ENCODE measurements at regions of chr7 and their contacts with region 1.

Region 1: GRCh38 chr7:27210441-27211083 is 10.7 kb upstream of the HOXA13 start:
- DNase-seq: no peak
- ATAC-seq: peak; percentile 87
- H3K4me3 ChIP-seq: no peak overlapping the region
- H3K27ac ChIP-seq: no peak overlapping the region
- H3K4me1 ChIP-seq: peaks cover 0 to 18% of the 10 kb centered on the region in 2 donors
- H3K27me3 ChIP-seq: peaks cover 91 to 99% of the 10 kb centered on the region in 2 donors
- CTCF ChIP-seq: peak; percentile 78 to 88

Region 2: DNA sequence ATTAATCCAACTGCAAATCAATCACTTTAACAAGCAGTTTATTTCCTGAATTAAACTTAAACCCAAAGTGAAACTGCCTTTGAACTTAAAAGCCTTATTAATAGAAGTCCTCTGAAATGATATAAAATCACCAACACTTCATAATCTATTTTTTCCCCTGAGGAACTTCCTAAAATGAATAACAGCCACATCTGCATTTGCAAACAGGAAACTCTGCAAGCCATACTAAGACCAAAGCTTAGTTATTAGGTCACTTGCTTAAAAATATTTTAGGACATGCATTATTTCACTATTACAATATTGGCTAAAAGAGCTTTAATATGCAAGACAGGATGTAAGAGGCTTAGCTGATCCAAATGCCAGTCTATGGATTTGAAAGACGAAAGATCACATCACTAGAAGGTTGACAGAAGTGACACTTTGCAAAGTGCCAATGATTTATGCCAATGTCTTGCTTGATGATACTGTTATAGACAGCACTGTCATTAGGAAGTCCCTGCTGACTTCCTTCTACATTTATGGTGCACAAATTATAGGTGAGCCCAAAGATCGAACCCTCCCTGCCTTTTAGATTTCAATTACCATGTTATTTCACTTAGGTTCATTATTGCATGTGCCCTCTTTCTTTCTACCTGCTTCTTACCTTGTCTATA is 246.3 kb before region 1 on chr7:
- intact Hi-C with region 1: no loop called
- DNase-seq: no peak
- ATAC-seq: no peak
- H3K4me3 ChIP-seq: no peak overlapping the region
- H3K27ac ChIP-seq: no peak overlapping the region
- H3K4me1 ChIP-seq: peaks cover 0 to 5% of the 10 kb centered on the region in 2 donors
- H3K27me3 ChIP-seq: no peaks in the 10 kb centered on the region
- CTCF ChIP-seq: no peak

Region 3: DNA sequence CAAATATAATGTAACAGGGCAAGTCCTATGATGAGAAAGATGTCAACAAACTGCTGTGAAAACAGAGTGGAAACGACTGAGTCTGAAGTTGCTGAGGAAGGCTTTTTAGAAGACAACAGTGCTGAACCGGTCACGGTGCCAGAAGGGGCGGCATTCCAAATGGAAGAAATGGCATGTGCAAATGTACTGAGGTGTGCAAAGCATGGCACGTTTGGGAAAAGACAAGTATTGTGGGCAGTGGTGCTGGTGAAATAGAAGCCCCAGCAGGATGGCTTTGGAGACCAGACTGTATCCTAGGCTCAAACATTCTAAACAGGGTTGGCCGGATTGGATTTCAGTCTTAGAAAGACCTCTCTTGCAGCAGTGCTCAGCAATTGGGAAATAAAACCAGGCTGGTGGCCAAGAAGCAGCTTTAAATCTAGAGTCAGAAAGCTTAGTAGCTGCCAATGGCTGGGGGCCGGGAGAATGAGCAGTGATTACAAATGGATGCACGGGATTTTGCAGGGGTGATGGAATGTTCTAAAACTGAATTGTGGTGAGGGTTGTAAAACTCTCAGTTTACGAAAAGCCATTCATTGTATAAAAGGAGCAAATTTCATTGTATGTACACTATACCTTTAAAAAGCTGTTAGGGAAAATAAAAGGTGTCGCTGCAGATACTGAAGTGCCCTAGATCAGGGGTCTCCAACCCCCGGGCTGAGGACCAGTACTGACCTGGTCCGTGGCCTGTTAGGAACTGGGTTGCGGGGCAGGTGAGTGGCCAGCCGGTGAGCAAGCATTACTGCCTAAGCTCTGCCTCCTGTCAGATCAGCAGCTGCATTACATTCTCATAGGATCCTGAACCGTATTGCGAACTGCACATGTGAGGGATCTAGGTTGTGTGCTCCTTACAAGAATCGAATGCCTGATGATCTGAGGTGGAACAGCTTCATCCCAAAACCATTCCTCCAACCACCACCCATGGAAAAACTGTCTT is 310.5 kb after region 1 on chr7:
- intact Hi-C with region 1: no loop called
- DNase-seq: peak in 3 of 4 donors; percentile 44 to 91 (median 88)
- ATAC-seq: peak; percentile 44
- H3K4me3 ChIP-seq: no peak overlapping the region
- H3K27ac ChIP-seq: no peak overlapping the region
- H3K4me1 ChIP-seq: no peaks in the 10 kb centered on the region
- H3K27me3 ChIP-seq: no peaks in the 10 kb centered on the region
- CTCF ChIP-seq: no peak

Region 4: GRCh38 chr7:27576360-27576944 is 365.9 kb after region 1 on chr7:
- intact Hi-C with region 1: loop called in 1 of 2 experiments (anchors 5 kb)
- DNase-seq: peak in 2 of 4 donors; percentile 55 to 64
- ATAC-seq: peak; percentile 76
- H3K4me3 ChIP-seq: no peak overlapping the region
- H3K27ac ChIP-seq: no peak overlapping the region
- H3K4me1 ChIP-seq: no peaks in the 10 kb centered on the region
- H3K27me3 ChIP-seq: no peaks in the 10 kb centered on the region
- CTCF ChIP-seq: peak; percentile 58 to 63

Measured in left lung (tissue), 14 donors.